ENCODE measurements at regions of chr18 and their contacts with region 1.

Region 1: GRCh38 chr18:47100214-47100831 is 50.0 kb downstream of the HDHD2 start:
- DNase-seq: peak; percentile 38
- ATAC-seq: peak; percentile 62; the same call in 1 of the 2 replicates
- H3K4me3 ChIP-seq: no peak overlapping the region
- H3K27ac ChIP-seq: no peak overlapping the region
- H3K4me1 ChIP-seq: no peaks in the 10 kb centered on the region
- H3K27me3 ChIP-seq: no peaks in the 10 kb centered on the region
- CTCF ChIP-seq: peak; percentile 75

Region 2: GRCh38 chr18:47067648-47068047 is 32.7 kb before region 1 on chr18:
- CTCF ChIA-PET with region 1: no interaction called
- POLR2A ChIA-PET with region 1: no interaction called
- in situ Hi-C with region 1: no loop called
- intact Hi-C with region 1: no loop called
- DNase-seq: no peak
- ATAC-seq: no peak
- H3K4me3 ChIP-seq: no peak overlapping the region
- H3K27ac ChIP-seq: no peak overlapping the region
- H3K4me1 ChIP-seq: no peaks in the 10 kb centered on the region
- H3K27me3 ChIP-seq: no peaks in the 10 kb centered on the region
- CTCF ChIP-seq: no peak

Region 3: DNA sequence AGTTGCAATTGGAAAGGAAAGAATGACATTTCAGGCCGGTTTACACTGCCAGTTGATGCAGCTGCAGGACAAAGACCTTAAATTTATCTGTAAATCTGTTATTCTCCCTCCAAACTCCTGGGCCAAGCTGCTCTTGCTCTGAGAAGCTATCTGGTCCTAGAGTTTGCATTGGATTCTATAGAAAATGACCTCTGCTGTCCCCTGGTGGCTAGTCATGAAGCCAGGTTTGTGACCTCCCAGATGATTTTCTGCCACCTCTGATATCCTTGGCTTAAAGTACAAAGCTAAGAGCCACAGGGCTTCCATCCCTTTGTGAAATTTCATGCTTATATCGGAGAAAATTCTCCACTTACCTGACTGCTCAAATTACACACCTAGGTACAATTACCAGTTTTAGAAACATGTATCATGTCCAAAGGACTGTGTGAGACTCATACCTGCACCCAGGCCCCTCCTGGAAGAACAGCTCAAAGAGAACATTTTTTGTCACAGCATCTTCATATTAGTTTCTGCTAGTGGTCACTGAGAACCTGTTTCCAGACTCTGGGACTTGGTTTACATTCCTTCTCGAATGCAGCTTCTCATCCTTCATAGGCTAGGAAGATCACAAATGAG is 104.7 kb after region 1 on chr18:
- CTCF ChIA-PET with region 1: interaction called, 3 read pairs
- POLR2A ChIA-PET with region 1: no interaction called
- in situ Hi-C with region 1: no loop called
- intact Hi-C with region 1: loop called (anchors 1 kb)
- DNase-seq: no peak
- ATAC-seq: peak; percentile 80
- H3K4me3 ChIP-seq: no peak overlapping the region
- H3K27ac ChIP-seq: no peak overlapping the region
- H3K4me1 ChIP-seq: no peaks in the 10 kb centered on the region
- H3K27me3 ChIP-seq: peaks cover 4% of the 10 kb centered on the region; the same call in 1 of the 2 replicates
- CTCF ChIP-seq: peak; percentile 76

Region 4: GRCh38 chr18:47283476-47283875 is 183.2 kb after region 1 on chr18:
- CTCF ChIA-PET with region 1: no interaction called
- POLR2A ChIA-PET with region 1: no interaction called
- in situ Hi-C with region 1: no loop called
- intact Hi-C with region 1: loop called (anchors 5 kb)
- DNase-seq: no peak
- ATAC-seq: peak; percentile 69; the same call in 1 of the 2 replicates
- H3K4me3 ChIP-seq: no peak overlapping the region
- H3K27ac ChIP-seq: no peak overlapping the region
- H3K4me1 ChIP-seq: no peaks in the 10 kb centered on the region
- H3K27me3 ChIP-seq: no peaks in the 10 kb centered on the region
- CTCF ChIP-seq: peak; percentile 68

Measured in Panc1 (cell line).